Posterior vena cava (tissue), 2 donors: ENCODE measurements at regions of chr10 and their contacts with region 1.

Region 1: DNA sequence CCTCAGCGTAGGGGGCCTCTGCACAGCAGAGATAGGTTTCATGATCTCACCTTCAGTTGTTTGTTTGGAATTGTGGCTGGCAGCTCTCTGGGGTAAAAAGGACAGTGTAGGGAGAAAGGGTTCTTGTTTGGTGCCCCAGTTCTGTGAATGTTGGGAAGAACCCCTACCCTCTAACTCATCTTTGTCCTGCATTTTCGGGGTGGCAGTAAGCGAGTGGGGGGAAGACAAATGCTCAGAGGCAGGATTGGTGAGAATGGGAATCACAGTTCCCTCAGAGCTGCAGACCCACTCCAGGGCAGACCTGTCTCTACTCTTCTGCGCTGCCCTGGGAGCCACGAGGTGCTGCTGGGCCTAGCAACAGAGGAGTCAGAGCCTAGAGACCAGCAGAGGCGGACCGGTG is 1.8 kb upstream of the LBX1 start:
- DNase-seq: no peak

Region 2: DNA sequence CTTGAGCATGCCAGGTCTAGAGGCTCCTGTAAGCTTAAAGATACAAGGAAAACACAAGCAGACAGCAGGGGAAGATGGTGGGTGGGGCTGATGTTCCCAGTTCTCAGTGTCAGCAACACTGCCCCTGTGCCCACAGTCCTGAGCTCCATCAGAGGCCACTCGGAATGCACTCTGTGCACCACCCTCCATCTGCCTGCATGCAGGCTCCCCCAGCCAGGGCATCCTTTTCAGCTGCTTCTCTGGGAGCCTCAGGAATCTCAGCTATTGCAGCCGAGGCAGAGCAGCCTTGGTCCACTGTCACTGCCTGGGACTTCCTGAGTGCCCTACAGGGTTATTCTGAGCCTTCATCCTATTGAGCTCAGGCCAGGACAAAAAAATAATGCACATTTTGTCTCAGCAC is 24.1 kb before region 1 on chr10:
- intact Hi-C with region 1: loop called in 1 of 2 experiments (anchors 1 kb)
- DNase-seq: no peak